GM10248 (cell line): ENCODE measurements at regions of chr17 and their contacts with region 1.

Region 1: GRCh38 chr17:4420692-4421131 is 13.0 kb upstream of the SPNS3 start:
- DNase-seq: peak; percentile 83
- CTCF ChIP-seq: peak; percentile 78

Region 2: DNA sequence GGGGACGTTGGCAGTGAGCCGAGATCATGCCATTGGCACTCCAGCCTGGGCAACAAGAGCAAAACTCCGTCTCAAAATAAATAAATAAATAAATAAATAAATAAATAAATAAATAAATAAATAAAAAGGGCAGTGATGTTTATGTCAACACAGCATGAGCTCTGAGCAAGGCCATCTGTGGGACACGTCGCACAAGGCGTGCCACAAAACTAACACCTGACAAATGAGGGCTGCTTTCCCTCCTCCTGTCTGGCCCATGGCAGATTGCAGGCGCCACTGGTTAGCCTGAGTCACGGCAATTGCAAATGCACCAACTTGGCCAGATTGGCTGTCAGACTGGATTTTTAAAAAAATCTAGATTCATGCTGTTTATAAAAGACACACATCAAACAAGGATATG is 12.9 kb before region 1 on chr17:
- CTCF ChIA-PET with region 1: interaction called, 14 read pairs
- POLR2A ChIA-PET with region 1: no interaction called
- DNase-seq: no peak
- CTCF ChIP-seq: no peak

Region 3: DNA sequence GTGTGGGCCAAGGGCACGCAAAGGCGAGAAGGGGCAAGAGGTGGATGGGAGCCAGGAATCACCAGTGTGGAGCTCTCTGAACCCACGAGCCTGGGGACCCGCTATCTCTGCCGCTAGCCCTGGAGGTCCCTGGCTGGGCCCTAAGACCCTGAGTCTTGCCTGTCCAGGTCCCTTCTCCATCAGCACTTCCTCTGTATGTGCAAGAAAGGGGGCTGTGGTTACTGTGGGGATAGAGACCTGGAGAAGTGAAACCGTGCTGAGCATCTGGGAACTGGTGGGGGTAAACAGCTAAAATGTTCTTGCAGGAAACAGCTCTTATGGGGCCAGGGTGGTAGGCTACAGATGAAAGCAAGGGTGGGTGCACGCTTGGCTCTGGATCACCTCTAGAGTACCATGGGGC is 16.1 kb after region 1 on chr17:
- CTCF ChIA-PET with region 1: interaction called, 16 read pairs
- POLR2A ChIA-PET with region 1: no interaction called
- DNase-seq: no peak
- CTCF ChIP-seq: no peak

Region 4: DNA sequence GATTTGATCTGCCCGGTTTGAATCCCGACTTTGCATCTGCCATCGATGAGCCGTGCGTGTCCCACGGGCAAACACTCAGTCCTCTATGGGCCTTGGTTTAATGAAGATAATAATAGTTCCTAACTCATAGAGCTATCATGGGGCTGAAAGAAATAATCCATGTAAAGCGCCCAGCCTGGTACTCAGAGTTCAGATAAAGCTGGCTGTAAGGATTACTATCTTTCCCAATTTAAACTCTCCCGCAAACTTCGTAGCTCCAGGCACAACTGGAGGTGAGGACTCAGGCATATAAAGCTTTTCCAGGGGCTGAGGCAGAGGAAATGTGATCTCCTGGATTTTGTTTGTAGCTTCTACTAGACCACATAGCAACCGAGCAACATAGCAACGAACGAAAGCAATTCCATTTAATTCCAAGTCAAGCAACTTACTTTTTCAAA is 204.5 kb after region 1 on chr17:
- CTCF ChIA-PET with region 1: interaction called, 14 read pairs
- POLR2A ChIA-PET with region 1: no interaction called
- DNase-seq: no peak
- CTCF ChIP-seq: no peak